CD8-positive, alpha-beta memory T cell (primary cell): ENCODE measurements at regions of chr4 and their contacts with region 1.

Region 1: GRCh38 chr4:173013232-173013930 is 155.2 kb upstream of the GALNT7 start:
- DNase-seq: peak; percentile 13 to 51 (median 33)
- H3K4me3 ChIP-seq: no peak overlapping the region
- H3K4me3 Mint-ChIP-seq: no peak overlapping the region
- H3K27ac ChIP-seq: no peak overlapping the region
- H3K27ac Mint-ChIP-seq: no peak overlapping the region
- H3K4me1 ChIP-seq: no peaks in the 10 kb centered on the region
- H3K4me1 Mint-ChIP-seq: no peaks in the 10 kb centered on the region
- H3K27me3 ChIP-seq: no peaks in the 10 kb centered on the region
- H3K27me3 Mint-ChIP-seq: peaks cover 0 to 8% of the 10 kb centered on the region in 2 donors

Region 2: DNA sequence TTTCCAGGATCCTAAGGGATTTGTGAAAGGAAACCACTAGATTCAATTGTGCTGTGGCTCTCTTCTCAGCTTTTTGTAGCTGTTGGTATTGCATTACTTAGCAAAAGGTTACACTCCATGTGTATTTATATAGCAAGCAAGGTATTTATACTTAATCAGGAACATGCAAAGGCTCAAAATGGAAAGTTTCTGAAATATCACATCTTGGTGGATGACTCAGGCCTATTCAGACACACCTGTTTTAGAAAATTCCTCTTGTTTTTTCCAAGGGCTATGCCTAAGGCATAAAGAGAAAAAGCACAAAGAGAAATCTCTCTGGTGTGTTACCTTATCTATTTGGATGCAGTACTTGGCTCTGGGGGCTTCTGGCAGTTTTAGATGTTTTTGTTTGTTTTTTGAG is 10.8 kb after region 1 on chr4:
- CTCF ChIA-PET with region 1: interaction called, 21 read pairs
- POLR2A ChIA-PET with region 1: no interaction called
- DNase-seq: no peak
- H3K4me3 ChIP-seq: no peak overlapping the region
- H3K4me3 Mint-ChIP-seq: no peak overlapping the region
- H3K27ac ChIP-seq: no peak overlapping the region
- H3K27ac Mint-ChIP-seq: no peak overlapping the region
- H3K4me1 ChIP-seq: no peaks in the 10 kb centered on the region
- H3K4me1 Mint-ChIP-seq: no peaks in the 10 kb centered on the region
- H3K27me3 ChIP-seq: no peaks in the 10 kb centered on the region
- H3K27me3 Mint-ChIP-seq: peaks cover 7 to 11% of the 10 kb centered on the region in 2 donors

Region 3: GRCh38 chr4:173135241-173135847 is 122.0 kb after region 1 on chr4:
- CTCF ChIA-PET with region 1: no interaction called
- POLR2A ChIA-PET with region 1: no interaction called
- DNase-seq: no peak
- H3K4me3 ChIP-seq: no peak overlapping the region
- H3K4me3 Mint-ChIP-seq: no peak overlapping the region
- H3K27ac ChIP-seq: no peak overlapping the region
- H3K27ac Mint-ChIP-seq: no peak overlapping the region
- H3K4me1 ChIP-seq: no peaks in the 10 kb centered on the region
- H3K4me1 Mint-ChIP-seq: no peaks in the 10 kb centered on the region
- H3K27me3 ChIP-seq: no peaks in the 10 kb centered on the region
- H3K27me3 Mint-ChIP-seq: peaks cover 1 to 13% of the 10 kb centered on the region in 2 donors

Region 4: DNA sequence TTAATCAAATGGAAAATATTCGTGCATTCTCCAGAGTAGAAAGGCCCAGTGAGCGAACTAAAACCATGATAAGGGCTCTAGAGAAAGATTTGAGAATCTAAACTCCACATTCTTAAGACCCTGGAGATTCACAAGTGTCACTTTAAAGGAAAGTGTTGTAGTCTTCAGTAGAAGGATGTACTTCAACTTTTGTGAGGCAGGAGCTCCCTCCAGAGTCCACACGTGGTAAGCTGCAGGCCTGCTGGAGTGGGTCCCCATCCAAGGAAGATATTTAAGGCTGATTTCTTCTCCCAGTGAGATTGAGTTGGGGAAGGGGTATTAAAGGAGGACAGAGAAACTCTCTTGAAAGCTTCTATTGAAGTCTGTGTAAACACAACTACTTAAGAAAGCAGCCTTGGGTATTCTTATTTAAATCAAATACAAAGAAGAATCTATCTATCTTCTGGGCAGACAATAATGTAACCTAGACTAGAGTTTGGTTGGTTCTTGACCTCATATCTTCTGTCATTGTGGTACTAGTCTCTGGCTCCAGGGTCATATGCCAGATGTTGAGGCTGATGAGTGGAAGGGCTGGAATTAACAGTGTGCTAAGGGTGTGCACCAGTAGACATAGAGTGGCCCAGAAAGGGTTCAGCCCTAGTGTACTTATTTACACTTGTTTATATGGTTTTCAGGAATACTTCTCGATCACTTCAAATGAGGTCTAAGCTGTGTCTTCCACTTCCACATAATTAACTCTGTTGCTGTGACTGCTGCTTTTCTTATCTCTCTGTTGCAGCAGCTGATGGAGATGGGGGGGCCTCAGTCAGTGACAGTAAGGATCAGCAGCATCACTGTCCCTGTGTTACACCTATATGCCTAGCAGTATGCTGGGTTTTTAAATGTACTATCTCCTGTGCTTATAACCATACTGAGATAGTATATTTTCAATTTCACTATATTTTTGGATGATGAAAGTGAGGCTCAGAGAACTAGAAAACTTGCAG is 244.6 kb after region 1 on chr4:
- CTCF ChIA-PET with region 1: interaction called, 43 read pairs
- POLR2A ChIA-PET with region 1: no interaction called
- DNase-seq: peak; percentile 8 to 66 (median 24)
- H3K4me3 ChIP-seq: no peak overlapping the region
- H3K4me3 Mint-ChIP-seq: no peak overlapping the region
- H3K27ac ChIP-seq: no peak overlapping the region
- H3K27ac Mint-ChIP-seq: no peak overlapping the region
- H3K4me1 ChIP-seq: no peaks in the 10 kb centered on the region
- H3K4me1 Mint-ChIP-seq: peaks cover 3 to 6% (median 5%) of the 10 kb centered on the region in 3 donors
- H3K27me3 ChIP-seq: no peaks in the 10 kb centered on the region
- H3K27me3 Mint-ChIP-seq: no peaks in the 10 kb centered on the region